MCF 10A (cell line): ENCODE measurements at regions of chr5 and their contacts with region 1.

Region 1: GRCh38 chr5:80083101-80083890 is 48.1 kb downstream of the THBS4 start:
- DNase-seq: peak; percentile 82
- H3K4me3 Mint-ChIP-seq: peak overlapping the region; percentile 74
- H3K27ac Mint-ChIP-seq: peak overlapping the region; percentile 67
- H3K4me1 Mint-ChIP-seq: peaks cover 11% of the 10 kb centered on the region
- H3K27me3 Mint-ChIP-seq: no peaks in the 10 kb centered on the region
- CTCF ChIP-seq: peak; percentile 60

Region 2: GRCh38 chr5:79133657-79134451 is 949.4 kb before region 1 on chr5:
- CTCF ChIA-PET with region 1: interaction called, 7 read pairs
- POLR2A ChIA-PET with region 1: no interaction called
- intact Hi-C with region 1: loop called (anchors 1 kb)
- DNase-seq: peak; percentile 84
- H3K4me3 Mint-ChIP-seq: peak overlapping the region; percentile 63
- H3K27ac Mint-ChIP-seq: peak overlapping the region; percentile 72
- H3K4me1 Mint-ChIP-seq: peaks cover 12% of the 10 kb centered on the region
- H3K27me3 Mint-ChIP-seq: no peaks in the 10 kb centered on the region
- CTCF ChIP-seq: peak; percentile 72

Region 3: DNA sequence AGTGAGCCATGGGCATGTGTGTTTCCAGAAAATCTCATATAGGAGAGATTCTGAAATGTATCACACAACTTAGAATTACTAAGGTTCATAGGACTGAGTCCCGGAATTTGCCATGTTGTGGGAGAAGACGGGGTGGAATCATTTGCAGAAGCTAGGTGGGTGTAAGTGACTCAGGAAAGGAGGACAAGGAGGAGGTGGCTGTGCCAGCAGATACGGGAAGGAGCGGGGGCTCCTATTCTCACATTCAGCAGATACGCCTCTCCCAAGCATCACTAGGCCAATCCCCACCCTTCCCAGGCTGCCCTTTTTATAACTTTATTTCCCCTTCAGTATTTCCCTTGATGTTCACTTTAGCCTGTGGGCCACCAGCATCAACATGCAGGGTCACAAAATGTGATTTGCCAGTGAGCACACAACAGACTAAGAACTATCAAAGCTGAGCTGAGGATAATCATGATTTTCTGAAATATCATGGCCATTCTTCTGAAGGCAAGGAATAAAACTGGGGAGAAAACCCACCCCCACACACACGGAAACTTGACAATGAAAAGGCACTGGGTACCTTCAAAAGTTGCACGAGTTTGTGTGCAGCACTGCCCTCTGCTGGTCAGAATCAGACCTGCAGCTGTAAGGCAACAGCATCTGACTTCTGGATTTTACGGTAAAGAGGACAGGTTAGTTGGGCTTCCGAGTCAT is 225.4 kb before region 1 on chr5:
- CTCF ChIA-PET with region 1: interaction called, 5 read pairs
- POLR2A ChIA-PET with region 1: no interaction called
- intact Hi-C with region 1: loop called (anchors 1 kb)
- DNase-seq: peak; percentile 71
- H3K4me3 Mint-ChIP-seq: no peak overlapping the region
- H3K27ac Mint-ChIP-seq: no peak overlapping the region
- H3K4me1 Mint-ChIP-seq: no peaks in the 10 kb centered on the region
- H3K27me3 Mint-ChIP-seq: no peaks in the 10 kb centered on the region
- CTCF ChIP-seq: peak; percentile 80

Region 4: DNA sequence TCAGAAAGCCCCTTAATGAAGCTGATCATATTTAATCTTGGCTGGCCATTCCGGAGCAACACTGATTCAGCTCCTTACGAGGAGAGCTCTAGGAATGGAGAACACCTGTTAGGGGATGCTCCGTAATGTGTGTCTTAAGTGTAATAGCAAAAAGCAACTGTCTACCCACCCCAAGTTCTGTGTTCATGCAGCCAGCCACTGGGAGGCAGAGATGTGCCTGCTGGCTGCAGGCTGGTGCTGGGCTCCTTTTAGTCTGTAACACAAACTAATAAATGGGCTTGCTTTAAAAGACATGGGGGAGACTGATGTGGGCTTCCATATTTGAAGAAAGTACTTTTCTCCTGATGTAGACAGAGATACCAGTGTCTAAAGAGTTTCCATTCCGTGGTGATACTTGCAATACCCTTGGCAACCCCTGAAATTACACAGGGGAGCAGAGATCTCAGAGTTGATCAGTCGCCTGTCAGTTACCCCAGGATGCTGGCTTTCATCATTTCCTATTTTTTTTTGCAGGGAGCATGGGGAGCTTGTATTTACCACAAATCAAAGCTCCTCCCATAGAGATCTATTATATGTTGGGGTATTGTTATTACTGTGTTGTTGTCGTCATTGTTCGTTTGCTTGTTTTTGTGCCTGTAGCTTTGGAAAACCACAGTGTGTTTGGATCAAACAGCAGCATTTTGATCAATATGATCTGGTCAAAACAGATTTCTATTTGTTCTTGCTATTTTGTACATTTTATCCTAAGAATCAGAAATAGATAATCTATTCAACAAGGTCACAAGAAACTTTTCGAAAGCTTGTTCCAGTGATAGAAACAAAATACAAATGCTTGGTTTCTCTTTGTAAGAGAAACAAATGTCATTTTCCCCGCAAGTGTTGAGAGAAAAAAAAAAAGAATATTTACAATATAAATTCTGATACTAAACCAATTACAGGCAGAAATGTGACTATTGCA is 158.1 kb before region 1 on chr5:
- CTCF ChIA-PET with region 1: interaction called, 14 read pairs
- POLR2A ChIA-PET with region 1: no interaction called
- intact Hi-C with region 1: loop called (anchors 1 kb)
- DNase-seq: peak; percentile 11
- H3K4me3 Mint-ChIP-seq: no peak overlapping the region
- H3K27ac Mint-ChIP-seq: no peak overlapping the region
- H3K4me1 Mint-ChIP-seq: no peaks in the 10 kb centered on the region
- H3K27me3 Mint-ChIP-seq: peaks cover 17% of the 10 kb centered on the region
- CTCF ChIP-seq: no peak

Region 5: DNA sequence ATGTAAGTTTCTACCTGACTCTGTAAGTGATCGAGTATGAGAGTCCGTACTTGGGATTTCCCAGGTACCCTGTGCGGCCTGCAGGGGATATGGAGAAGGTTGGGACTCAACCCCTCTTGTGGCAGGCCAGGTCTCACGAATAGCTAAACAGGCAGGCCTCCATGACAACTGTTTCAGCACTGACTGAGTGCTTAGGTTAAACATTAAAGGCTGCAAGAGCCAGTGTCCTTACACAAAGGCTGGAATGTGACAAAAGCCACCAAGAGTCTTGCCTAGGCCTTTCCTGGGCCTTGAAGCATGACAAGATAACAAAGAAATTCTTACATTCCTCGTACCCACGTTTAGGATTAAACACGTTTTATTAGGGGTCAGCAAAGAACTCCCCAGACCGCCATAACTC is 10.5 kb after region 1 on chr5:
- CTCF ChIA-PET with region 1: interaction called, 13 read pairs
- POLR2A ChIA-PET with region 1: no interaction called
- intact Hi-C with region 1: no loop called
- DNase-seq: no peak
- H3K4me3 Mint-ChIP-seq: no peak overlapping the region
- H3K27ac Mint-ChIP-seq: no peak overlapping the region
- H3K4me1 Mint-ChIP-seq: no peaks in the 10 kb centered on the region
- H3K27me3 Mint-ChIP-seq: no peaks in the 10 kb centered on the region
- CTCF ChIP-seq: no peak

Region 6: DNA sequence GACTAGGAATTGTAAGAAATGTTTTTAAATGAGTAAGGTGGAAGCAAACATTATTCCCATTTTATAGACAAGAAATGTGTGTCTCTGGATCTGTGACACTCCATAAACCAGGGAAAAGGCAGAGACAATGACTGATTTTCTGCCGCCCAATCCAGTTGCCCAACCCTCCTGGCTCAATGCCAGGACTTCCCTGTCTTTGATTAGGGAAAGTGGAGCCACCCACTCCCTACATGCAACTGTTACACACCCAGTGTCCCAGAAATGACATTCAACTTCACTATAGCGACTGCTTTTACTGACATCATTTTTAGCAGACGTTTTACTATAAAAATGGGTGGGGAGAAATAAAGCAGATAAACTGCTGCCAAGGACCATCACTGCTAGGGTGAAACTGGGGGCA is 31.6 kb after region 1 on chr5:
- CTCF ChIA-PET with region 1: no interaction called
- POLR2A ChIA-PET with region 1: no interaction called
- intact Hi-C with region 1: no loop called
- DNase-seq: peak; percentile 16
- H3K4me3 Mint-ChIP-seq: no peak overlapping the region
- H3K27ac Mint-ChIP-seq: no peak overlapping the region
- H3K4me1 Mint-ChIP-seq: no peaks in the 10 kb centered on the region
- H3K27me3 Mint-ChIP-seq: no peaks in the 10 kb centered on the region
- CTCF ChIP-seq: no peak